ENCODE measurements at regions of chr1 and their contacts with region 1.

Region 1: DNA sequence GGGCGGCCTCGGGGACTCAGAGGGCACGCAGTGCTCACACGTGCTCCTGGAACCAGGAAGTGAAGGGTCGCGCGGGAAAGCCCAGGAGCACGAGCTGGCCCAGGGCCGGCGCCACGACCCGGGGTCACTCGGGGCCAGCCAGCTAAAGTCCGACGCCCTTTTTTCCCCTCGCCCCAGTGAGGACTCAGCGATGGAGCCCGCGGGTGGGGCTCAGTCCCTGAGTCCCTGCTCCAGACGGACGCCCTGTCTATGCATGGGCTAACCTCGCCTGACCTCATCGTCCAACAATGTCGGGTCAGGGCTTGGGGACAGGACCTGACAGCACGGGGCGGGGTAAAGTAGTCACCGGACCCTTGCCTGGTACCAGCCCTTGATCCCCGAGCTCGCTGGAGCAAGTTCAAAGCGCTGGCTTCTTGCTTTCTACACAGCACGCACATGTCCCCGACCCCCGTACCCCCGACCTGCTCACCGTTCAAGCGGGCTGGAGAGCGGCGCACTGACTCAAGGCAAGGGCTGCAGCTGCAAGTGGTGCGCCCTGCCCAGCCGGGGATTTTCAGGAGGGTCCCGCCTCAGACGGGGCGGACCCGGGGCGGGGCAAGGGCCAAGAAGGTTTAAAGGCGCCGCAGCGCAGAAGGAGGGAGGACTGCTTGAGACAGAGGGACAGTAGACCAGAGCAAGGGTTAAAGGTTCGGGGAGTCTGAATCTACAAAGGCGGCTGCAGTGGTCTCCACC is at the start of gene TAGLN2:
- DNase-seq: peak; percentile 81 to 94 (median 86)
- ATAC-seq: peak; percentile 63
- H3K4me3 ChIP-seq: peak within 1 kb of the TSS; percentile 95
- H3K4me3 Mint-ChIP-seq: peak within 1 kb of the TSS; percentile 88 to 99 (median 94)
- H3K27ac ChIP-seq: peak within 1 kb of the TSS; percentile 95
- H3K27ac Mint-ChIP-seq: peak within 1 kb of the TSS; percentile 96 to 100 (median 99)
- H3K4me1 ChIP-seq: peaks cover 27 to 35% of the 10 kb centered on the region in 2 donors
- H3K4me1 Mint-ChIP-seq: peaks cover 34 to 54% (median 46%) of the 10 kb centered on the region in 7 donors
- H3K27me3 ChIP-seq: no peaks in the 10 kb centered on the region
- H3K27me3 Mint-ChIP-seq: peaks cover 0 to 11% (median 0%) of the 10 kb centered on the region in 5 donors
- total RNA-seq, gene TAGLN2: 116 to 450 (median 284) TPM

Region 2: GRCh38 chr1:159009704-159010361 is 915.3 kb before region 1 on chr1 and contains the start of gene IFI16:
- CTCF ChIA-PET with region 1: no interaction called
- POLR2A ChIA-PET with region 1: interaction called, 3 read pairs
- intact Hi-C with region 1: loop called (anchors 5 kb)
- DNase-seq: peak in 8 of 9 donors; percentile 56 to 80 (median 71)
- ATAC-seq: peak; percentile 84
- H3K4me3 ChIP-seq: peak within 1 kb of the TSS; percentile 86
- H3K4me3 Mint-ChIP-seq: peak within 1 kb of the TSS; percentile 85 to 98 (median 92)
- H3K27ac ChIP-seq: peak within 1 kb of the TSS; percentile 87
- H3K27ac Mint-ChIP-seq: peak within 1 kb of the TSS; percentile 92 to 99 (median 96)
- H3K4me1 ChIP-seq: peaks cover 28% of the 10 kb centered on the region in 2 donors
- H3K4me1 Mint-ChIP-seq: peaks cover 37 to 64% (median 54%) of the 10 kb centered on the region in 7 donors
- H3K27me3 ChIP-seq: no peaks in the 10 kb centered on the region
- H3K27me3 Mint-ChIP-seq: no peaks in the 10 kb centered on the region
- total RNA-seq, gene IFI16: 42.4 to 307 (median 96.0) TPM

Region 3: GRCh38 chr1:159854693-159855192 is 70.4 kb before region 1 on chr1:
- CTCF ChIA-PET with region 1: interaction called, 3 read pairs
- POLR2A ChIA-PET with region 1: interaction called, 30 read pairs
- intact Hi-C with region 1: loop called (anchors 1 kb)
- DNase-seq: peak; percentile 53 to 72 (median 70)
- ATAC-seq: peak; percentile 91
- H3K4me3 ChIP-seq: peak overlapping the region; percentile 69
- H3K4me3 Mint-ChIP-seq: peak overlapping the region; percentile 80 to 96 (median 91)
- H3K27ac ChIP-seq: peak overlapping the region; percentile 75
- H3K27ac Mint-ChIP-seq: peak overlapping the region in 8 of 9 donors; percentile 67 to 94 (median 88)
- H3K4me1 ChIP-seq: peaks cover 0 to 3% of the 10 kb centered on the region in 2 donors
- H3K4me1 Mint-ChIP-seq: peaks cover 14 to 37% (median 23%) of the 10 kb centered on the region in 7 donors
- H3K27me3 ChIP-seq: no peaks in the 10 kb centered on the region
- H3K27me3 Mint-ChIP-seq: peaks cover 0 to 32% (median 0%) of the 10 kb centered on the region in 5 donors

Region 4: DNA sequence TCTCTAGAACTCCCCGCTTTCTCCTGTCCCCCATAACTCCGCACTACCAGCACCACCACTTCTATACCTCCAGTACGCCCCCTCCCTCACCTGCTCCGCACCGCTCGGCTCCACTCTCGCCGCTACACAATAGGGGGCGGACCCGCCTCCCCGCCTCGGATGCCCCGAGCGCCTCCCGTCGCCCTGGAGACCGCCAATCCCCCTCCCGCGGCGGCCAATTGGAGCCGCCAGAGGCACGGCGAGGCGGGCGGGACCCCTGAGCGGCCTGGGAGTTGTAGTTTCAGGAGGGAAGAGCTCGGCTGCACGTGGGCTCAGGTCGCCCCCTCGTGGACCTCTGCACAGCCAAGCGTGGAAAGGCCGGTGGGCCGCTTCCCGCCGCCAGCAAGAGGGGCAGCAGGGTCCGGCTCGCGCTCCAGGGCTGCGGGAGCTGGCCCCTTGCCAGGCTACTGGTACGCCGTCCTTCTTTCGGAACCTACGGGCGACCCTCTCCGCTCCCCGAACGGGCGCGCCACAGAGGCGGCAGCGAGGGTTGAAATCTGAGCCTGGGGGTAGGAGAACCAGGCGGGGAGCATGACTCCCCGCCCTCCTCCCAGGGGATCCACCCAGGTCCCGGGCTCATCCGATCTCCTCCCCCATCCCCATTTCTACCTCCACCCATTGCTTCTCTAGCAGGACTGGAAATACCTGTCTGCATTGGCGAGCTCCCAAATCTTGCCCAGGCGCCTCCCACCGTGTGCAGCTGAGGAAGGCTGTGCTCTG is 20.5 kb after region 1 on chr1 and contains the start of gene IGSF9:
- CTCF ChIA-PET with region 1: interaction called, 4 read pairs
- POLR2A ChIA-PET with region 1: interaction called, 5 read pairs
- intact Hi-C with region 1: loop called in 1 of 2 experiments (anchors 1 kb)
- DNase-seq: peak in 8 of 9 donors; percentile 60 to 84 (median 76)
- ATAC-seq: peak; percentile 95
- H3K4me3 ChIP-seq: peak within 1 kb of the TSS; percentile 57
- H3K4me3 Mint-ChIP-seq: peak within 1 kb of the TSS; percentile 50 to 79 (median 72)
- H3K27ac ChIP-seq: no peak within 1 kb of the TSS
- H3K27ac Mint-ChIP-seq: peak within 1 kb of the TSS in 3 of 9 donors; percentile 9 to 69 (median 17)
- H3K4me1 ChIP-seq: peaks cover 4 to 7% of the 10 kb centered on the region in 2 donors
- H3K4me1 Mint-ChIP-seq: peaks cover 8 to 18% (median 14%) of the 10 kb centered on the region in 7 donors
- H3K27me3 ChIP-seq: peaks cover 8 to 11% of the 10 kb centered on the region in 2 donors
- H3K27me3 Mint-ChIP-seq: peaks cover 23 to 73% (median 30%) of the 10 kb centered on the region in 5 donors
- total RNA-seq, gene IGSF9: 0.12 TPM in 1 of 5 experiments, not detected in the others

Region 5: GRCh38 chr1:160261893-160262794 is 337.0 kb after region 1 on chr1 and contains the start of gene DCAF8:
- CTCF ChIA-PET with region 1: no interaction called
- POLR2A ChIA-PET with region 1: interaction called, 3 read pairs
- intact Hi-C with region 1: loop called (anchors 1 to 5 kb)
- DNase-seq: peak; percentile 92 to 97 (median 96)
- ATAC-seq: peak; percentile 96
- H3K4me3 ChIP-seq: peak within 1 kb of the TSS; percentile 66
- H3K4me3 Mint-ChIP-seq: peak within 1 kb of the TSS; percentile 82 to 100 (median 97)
- H3K27ac ChIP-seq: peak within 1 kb of the TSS; percentile 93
- H3K27ac Mint-ChIP-seq: peak within 1 kb of the TSS; percentile 94 to 100 (median 96)
- H3K4me1 ChIP-seq: peaks cover 22 to 29% of the 10 kb centered on the region in 2 donors
- H3K4me1 Mint-ChIP-seq: peaks cover 23 to 59% (median 45%) of the 10 kb centered on the region in 7 donors
- H3K27me3 ChIP-seq: no peaks in the 10 kb centered on the region
- H3K27me3 Mint-ChIP-seq: peaks cover 0 to 3% (median 0%) of the 10 kb centered on the region in 5 donors
- total RNA-seq, gene DCAF8: 115 to 226 (median 176) TPM

Region 6: DNA sequence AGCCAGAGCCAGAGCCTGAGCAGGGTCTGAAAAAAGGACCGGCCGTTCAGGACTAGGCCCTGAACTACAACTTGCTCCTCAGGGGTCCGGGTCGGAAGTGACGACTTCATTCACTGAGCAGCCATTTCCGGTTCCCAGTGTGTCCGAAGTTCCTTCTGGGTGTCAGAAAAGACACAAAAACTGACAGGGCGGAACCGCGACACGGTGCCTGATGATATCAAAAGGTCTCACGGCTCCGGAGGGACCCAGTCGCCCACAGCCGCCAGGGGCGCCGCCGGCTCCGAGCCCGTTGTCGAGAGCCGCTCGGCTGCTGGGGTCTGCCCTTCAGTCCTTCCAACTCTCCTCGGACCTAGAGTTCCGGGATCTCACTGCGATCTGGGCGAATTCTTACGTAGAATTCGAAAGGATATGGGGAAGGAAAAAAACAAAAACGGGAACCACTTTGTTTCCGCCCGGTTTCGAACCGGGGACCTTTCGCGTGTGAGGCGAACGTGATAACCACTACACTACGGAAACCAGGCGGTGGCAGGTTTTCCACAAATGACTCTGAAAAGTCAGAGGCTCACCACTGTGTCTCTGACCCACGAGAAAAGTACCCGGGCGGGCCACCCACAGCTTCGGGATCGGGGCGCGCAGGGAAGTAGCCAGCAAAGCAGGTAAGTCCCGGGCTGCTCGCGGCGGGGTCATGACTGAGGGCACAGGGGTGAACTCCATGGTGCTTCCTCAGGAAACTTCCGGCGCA is 1474.3 kb after region 1 on chr1:
- CTCF ChIA-PET with region 1: no interaction called
- POLR2A ChIA-PET with region 1: no interaction called
- intact Hi-C with region 1: loop called in 1 of 2 experiments (anchors 10 kb)
- DNase-seq: peak; percentile 87 to 97 (median 93)
- ATAC-seq: peak; percentile 87
- H3K4me3 ChIP-seq: peak overlapping the region; percentile 91
- H3K4me3 Mint-ChIP-seq: peak overlapping the region; percentile 93 to 99 (median 96)
- H3K27ac ChIP-seq: peak overlapping the region; percentile 92
- H3K27ac Mint-ChIP-seq: peak overlapping the region; percentile 99 to 100 (median 99)
- H3K4me1 ChIP-seq: peaks cover 11 to 13% of the 10 kb centered on the region in 2 donors
- H3K4me1 Mint-ChIP-seq: peaks cover 23 to 42% (median 31%) of the 10 kb centered on the region in 7 donors
- H3K27me3 ChIP-seq: no peaks in the 10 kb centered on the region
- H3K27me3 Mint-ChIP-seq: peaks cover 5 to 17% (median 11%) of the 10 kb centered on the region in 5 donors

Region 7: DNA sequence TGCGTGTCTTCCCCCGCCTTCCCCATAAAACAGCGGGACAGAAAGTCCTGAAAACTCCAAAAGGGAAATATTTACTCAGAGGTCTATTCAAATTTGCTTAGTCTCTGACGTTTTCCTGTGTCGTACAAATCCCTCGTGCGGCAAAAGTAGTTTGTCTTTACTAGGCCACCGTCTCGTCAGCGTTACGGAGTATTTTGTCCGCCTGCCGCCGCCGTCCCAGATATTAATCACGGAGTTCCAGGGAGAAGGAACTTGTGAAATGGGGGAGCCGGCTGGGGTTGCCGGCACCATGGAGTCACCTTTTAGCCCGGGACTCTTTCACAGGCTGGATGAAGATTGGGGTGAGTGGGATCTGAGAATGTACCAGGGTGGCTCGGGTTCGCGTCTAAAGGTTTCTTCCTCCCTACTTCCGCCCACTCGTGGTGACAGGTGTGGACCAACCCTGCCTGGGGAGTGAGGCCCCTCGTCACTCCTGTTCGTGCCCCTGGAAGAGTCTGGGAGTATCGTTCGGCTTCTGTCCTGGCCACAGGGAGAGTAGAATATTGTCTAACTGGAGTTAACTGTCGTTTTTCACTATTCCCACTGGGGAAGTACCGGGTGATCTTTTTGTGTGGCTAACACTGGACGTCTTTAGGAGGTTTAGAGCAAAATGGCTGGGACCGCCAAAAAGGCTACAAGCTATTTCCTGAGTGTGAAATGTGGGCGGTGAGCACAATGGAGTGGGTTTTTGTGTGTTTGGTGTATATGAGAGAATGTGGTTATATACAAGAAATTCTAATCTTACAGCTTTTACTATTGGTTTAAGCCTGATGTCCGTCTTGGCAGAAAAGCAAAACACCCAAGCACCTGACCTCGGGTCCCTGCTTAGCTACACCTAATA is 1841.2 kb after region 1 on chr1 and contains the start of gene ATF6:
- CTCF ChIA-PET with region 1: no interaction called
- POLR2A ChIA-PET with region 1: no interaction called
- intact Hi-C with region 1: loop called in 1 of 2 experiments (anchors 10 kb)
- DNase-seq: peak; percentile 55 to 84 (median 77)
- ATAC-seq: peak; percentile 88
- H3K4me3 ChIP-seq: peak within 1 kb of the TSS; percentile 100
- H3K4me3 Mint-ChIP-seq: peak within 1 kb of the TSS; percentile 96 to 100 (median 99)
- H3K27ac ChIP-seq: peak within 1 kb of the TSS; percentile 93
- H3K27ac Mint-ChIP-seq: peak within 1 kb of the TSS; percentile 96 to 99 (median 98)
- H3K4me1 ChIP-seq: peaks cover 21 to 26% of the 10 kb centered on the region in 2 donors
- H3K4me1 Mint-ChIP-seq: peaks cover 24 to 53% (median 43%) of the 10 kb centered on the region in 7 donors
- H3K27me3 ChIP-seq: no peaks in the 10 kb centered on the region
- H3K27me3 Mint-ChIP-seq: no peaks in the 10 kb centered on the region
- total RNA-seq, gene ATF6: 22.4 to 27.5 (median 26.9) TPM